A549 (cell line): ENCODE measurements at regions of chr4 and their contacts with region 1.

Region 1: DNA sequence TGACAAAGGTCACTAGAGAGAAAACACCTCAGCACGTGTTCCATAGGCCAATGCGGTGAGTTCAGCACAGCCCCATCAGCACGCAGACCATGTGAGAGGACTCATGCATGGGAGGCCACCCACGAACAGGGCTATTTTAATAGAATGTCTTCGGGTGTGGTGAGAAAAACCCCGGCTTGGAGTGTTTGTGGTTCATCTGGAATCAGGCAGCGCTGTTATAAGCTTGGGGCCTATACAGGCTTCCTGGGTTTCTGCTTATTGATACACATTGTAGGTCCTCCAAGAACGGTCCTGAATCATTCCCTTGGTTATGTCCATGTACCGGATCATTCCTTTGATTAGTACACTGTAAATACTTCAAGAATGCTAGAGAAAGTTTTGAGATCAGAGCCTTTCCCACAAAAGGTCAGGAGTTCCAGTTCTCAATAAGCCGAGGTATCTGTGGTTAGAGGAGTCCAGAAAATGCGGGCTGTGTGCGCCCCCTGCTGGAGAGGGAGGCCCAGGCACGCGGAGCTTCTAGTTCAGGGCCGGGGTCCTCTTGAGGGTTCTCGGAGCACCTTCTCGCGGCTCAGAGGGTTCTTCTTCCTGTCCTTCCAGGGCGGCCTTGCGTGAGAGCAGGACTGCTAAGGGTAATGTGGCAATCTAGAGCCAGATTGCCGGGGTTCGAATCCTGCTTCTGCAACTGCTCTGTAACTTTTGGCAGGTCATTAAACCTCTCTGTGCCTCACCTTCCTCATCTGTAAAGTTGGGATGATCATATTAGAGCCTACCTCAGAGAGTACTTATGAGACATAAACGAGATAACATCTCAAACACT is 51.8 kb downstream of the TLR10 start:
- DNase-seq: peak; percentile 30 to 64
- ATAC-seq: peak; percentile 75 to 93; a peak in 5 of 6 replicates
- H3K4me3 ChIP-seq: no peak overlapping the region
- H3K27ac ChIP-seq: peak overlapping the region in 1 of 2 experiments; percentile 50; a peak in 1 of 6 replicates
- H3K4me1 ChIP-seq: peaks cover 15% of the 10 kb centered on the region
- CTCF ChIP-seq: peak; percentile 75
- EP300 ChIP-seq: no peak
- POLR2A ChIP-seq: no peak
- RAD21 ChIP-seq: peak; percentile 92 to 94

Region 2: DNA sequence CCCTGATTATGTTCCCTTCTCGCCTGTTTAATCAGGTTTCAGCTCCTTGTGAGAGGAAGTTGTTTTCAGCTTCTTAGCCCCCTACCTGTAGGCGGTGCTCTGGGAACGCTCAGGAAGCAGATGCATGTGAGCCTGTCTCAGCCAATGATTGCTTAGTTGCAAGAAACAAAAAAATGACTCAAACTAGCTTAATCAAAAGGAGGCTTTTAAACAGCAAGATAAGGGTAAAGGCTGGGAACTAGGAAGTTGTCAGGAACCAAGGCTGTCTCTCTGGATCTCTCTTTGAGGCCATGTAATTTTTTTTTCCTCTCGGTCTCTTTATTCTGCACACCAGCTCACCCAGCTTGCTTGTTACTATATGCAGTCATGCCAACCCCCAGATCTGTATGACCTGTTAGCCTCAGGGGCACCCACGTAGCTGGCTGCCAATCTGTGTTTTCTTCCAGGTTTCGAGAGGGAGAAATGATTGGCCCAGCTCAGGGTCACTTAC is 661.7 kb before region 1 on chr4:
- CTCF ChIA-PET with region 1: interaction called, 29 read pairs
- POLR2A ChIA-PET with region 1: no interaction called
- DNase-seq: peak; percentile 29 to 71
- ATAC-seq: peak; percentile 70 to 80; a peak in 5 of 6 replicates
- H3K4me3 ChIP-seq: no peak overlapping the region
- H3K27ac ChIP-seq: peak overlapping the region; percentile 33 to 52; a peak in 4 of 6 replicates
- H3K4me1 ChIP-seq: peaks cover 4% of the 10 kb centered on the region; the same call in 1 of the 3 replicates
- CTCF ChIP-seq: peak; percentile 56
- EP300 ChIP-seq: no peak
- POLR2A ChIP-seq: no peak
- RAD21 ChIP-seq: peak; percentile 71 to 72

Region 3: GRCh38 chr4:38174801-38175200 is 556.2 kb before region 1 on chr4:
- CTCF ChIA-PET with region 1: interaction called, 102 read pairs
- POLR2A ChIA-PET with region 1: no interaction called
- DNase-seq: no peak
- ATAC-seq: no peak
- H3K4me3 ChIP-seq: no peak overlapping the region
- H3K27ac ChIP-seq: no peak overlapping the region
- H3K4me1 ChIP-seq: peaks cover 5% of the 10 kb centered on the region; the same call in 2 of the 3 replicates
- CTCF ChIP-seq: no peak
- EP300 ChIP-seq: no peak
- POLR2A ChIP-seq: no peak
- RAD21 ChIP-seq: no peak

Region 4: GRCh38 chr4:38612646-38613414 is 118.2 kb before region 1 on chr4:
- CTCF ChIA-PET with region 1: no interaction called
- POLR2A ChIA-PET with region 1: no interaction called
- DNase-seq: no peak
- ATAC-seq: no peak
- H3K4me3 ChIP-seq: no peak overlapping the region
- H3K27ac ChIP-seq: no peak overlapping the region
- H3K4me1 ChIP-seq: no peaks in the 10 kb centered on the region
- CTCF ChIP-seq: no peak
- EP300 ChIP-seq: no peak
- POLR2A ChIP-seq: no peak
- RAD21 ChIP-seq: no peak

Region 5: DNA sequence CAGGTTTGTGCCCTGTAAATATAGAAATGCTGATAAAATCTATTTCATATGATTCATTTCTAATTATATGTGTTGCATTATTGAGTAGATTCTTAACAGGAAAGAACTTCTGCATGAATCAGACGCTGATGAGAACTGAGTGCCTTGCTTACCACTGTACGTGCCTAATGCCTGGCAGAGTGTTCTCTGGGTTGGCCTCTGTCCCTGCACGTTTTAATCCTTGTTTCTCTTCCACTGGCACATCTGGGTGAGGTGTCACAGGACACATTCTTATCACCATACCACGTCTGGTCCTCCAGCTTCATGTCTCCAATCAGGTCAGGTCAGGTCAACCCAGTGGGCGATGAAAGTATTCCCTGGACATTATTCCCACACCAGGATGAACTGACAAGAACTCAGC is 13.4 kb before region 1 on chr4:
- CTCF ChIA-PET with region 1: interaction called, 32 read pairs
- POLR2A ChIA-PET with region 1: no interaction called
- DNase-seq: no peak
- ATAC-seq: no peak
- H3K4me3 ChIP-seq: no peak overlapping the region
- H3K27ac ChIP-seq: no peak overlapping the region
- H3K4me1 ChIP-seq: no peaks in the 10 kb centered on the region
- CTCF ChIP-seq: no peak
- EP300 ChIP-seq: no peak
- POLR2A ChIP-seq: no peak
- RAD21 ChIP-seq: no peak

Region 6: DNA sequence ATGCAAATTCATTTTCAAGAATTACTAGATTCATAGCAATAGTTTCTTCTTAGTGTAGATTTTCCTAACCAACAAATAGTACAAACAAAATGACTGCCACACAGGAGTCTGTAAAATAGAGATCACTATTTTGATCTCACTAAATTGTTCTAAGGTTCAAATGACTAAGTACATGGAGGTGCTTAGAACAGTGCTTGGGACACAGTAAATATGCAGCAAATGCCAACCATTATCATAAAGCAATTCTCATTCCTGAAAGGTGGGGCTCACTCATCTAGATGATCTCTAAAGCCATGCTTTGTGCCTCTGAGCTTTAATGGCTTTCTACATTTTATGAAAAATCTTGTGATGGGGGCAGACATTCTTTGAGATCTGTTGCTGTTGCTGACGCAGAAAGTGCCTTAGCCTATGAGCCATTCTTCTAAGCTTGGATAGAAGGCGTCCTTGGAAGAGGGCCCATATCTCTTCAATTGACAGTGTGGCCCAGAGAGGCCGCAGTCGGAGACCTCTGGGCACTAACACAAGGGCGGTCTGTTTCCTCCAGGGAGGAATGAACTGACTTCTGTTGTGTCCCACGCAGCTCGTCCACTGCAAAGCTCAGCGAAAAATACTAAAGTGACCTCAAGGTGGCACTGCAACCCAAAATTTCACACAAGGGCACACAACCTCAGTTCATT is 28.2 kb after region 1 on chr4:
- CTCF ChIA-PET with region 1: no interaction called
- POLR2A ChIA-PET with region 1: no interaction called
- DNase-seq: peak; percentile 15 to 43
- ATAC-seq: peak; percentile 74 to 94
- H3K4me3 ChIP-seq: no peak overlapping the region
- H3K27ac ChIP-seq: no peak overlapping the region
- H3K4me1 ChIP-seq: no peaks in the 10 kb centered on the region
- CTCF ChIP-seq: peak; percentile 77
- EP300 ChIP-seq: no peak
- POLR2A ChIP-seq: no peak
- RAD21 ChIP-seq: peak; percentile 86

Region 7: GRCh38 chr4:38804654-38805295 is 73.7 kb after region 1 on chr4 and contains the start of gene TLR1:
- CTCF ChIA-PET with region 1: no interaction called
- POLR2A ChIA-PET with region 1: no interaction called
- DNase-seq: peak in 1 of 2 experiments; percentile 56
- ATAC-seq: peak; percentile 56 to 66; a peak in 4 of 6 replicates
- H3K4me3 ChIP-seq: no peak within 1 kb of the TSS
- H3K27ac ChIP-seq: peak within 1 kb of the TSS; percentile 12 to 51; a peak in 3 of 6 replicates
- H3K4me1 ChIP-seq: peaks cover 7% of the 10 kb centered on the region; the same call in 1 of the 3 replicates
- CTCF ChIP-seq: peak; percentile 50
- EP300 ChIP-seq: no peak
- POLR2A ChIP-seq: no peak
- RAD21 ChIP-seq: peak; percentile 54 to 59
- polyA plus RNA-seq, gene TLR1: 2.6 and 2.7 TPM in 2 replicates